ENCODE measurements at regions of chr14 and their contacts with region 1.

Region 1: DNA sequence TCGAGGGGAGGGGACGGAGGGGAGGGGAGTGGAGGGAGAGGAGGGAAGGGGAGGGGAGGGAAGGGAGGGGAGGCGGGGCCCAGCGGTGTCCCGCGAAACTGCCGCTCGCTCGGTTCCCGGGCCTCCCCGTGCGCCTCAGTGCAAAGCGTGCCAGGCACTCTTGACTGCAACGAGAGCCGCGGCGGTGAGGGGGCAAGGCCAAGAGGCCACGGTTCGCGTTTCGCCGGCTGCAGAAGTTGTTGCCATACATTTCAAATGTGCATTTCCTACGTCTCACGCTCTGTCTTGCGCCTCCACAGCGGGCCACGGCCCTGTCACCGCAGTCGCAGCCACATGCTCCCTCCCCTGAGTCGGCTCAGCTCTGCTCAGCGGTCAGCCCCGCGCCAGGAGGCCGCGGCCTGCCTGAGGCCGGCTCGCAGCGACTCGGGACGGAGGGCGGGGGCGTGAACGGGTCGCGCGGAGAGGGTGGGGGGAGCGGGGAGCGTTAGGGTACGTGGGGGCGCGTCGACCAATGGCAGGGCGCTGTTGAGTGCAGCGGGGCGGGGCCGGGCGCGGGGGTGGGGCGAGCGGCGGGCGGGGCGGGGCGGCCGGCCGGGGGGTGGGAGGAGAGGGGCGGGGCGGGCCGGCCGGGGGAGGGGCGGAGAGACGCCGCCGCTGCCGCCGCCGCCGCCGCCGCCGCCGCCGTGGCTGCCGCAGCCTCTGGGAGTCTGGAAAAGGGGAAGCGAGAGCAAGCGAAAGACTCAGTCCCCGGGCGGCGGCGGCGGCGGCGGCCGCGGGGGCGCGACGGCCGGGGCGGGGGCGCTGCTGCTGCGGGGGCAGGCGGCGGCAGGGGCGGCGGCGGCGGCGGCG is at the start of gene PPP2R5C:
- DNase-seq: peak; percentile 96 to 97
- ATAC-seq: peak; percentile 94
- H3K4me3 ChIP-seq: peak within 1 kb of the TSS; percentile 72 to 90
- H3K27ac ChIP-seq: peak within 1 kb of the TSS in 1 of 2 donors; percentile 18
- H3K4me1 ChIP-seq: peaks cover 0 to 1% of the 10 kb centered on the region in 2 donors
- H3K27me3 ChIP-seq: no peaks in the 10 kb centered on the region
- total RNA-seq, gene PPP2R5C: 128 to 155 TPM

Region 2: DNA sequence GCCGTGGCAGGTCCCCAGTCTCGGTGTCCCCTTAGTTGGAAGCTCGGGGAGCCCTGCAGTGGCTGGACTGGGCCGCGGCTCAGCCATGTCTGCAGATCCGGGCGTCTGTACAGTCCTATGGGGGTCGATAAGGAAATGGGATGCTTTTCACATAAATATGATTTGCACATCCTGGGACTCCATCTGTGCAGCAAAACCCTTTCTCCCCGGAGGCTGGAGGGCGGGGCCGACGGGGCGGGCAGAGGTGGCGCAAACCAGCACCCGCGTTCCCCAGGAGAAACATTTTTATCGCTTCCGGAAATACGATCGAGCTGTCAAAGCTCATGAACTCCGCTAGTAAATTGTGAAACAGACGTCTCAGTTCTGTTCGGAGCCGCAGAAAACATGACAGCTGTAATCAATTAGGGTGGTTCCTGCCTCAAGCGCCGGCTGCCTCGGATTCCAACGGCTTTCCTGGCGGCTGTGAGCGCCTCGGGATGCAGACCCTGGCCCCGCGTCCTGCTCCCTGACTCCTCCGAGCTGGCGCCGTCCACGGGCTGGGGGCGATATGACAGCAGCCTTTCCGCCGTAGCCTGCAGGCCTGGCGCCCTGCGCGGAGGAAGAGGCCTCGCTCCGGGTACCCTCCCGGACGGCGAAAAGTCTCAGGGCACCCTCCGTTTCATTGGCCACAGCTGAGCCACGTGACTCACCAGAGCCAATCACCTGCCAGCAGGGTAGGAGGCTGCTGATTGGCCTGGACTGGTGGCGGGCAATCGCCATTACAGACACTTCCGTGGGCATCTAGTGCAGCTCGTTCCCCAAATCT is 177.0 kb before region 1 on chr14:
- intact Hi-C with region 1: no loop called
- DNase-seq: no peak
- ATAC-seq: no peak
- H3K4me3 ChIP-seq: no peak overlapping the region
- H3K27ac ChIP-seq: no peak overlapping the region
- H3K4me1 ChIP-seq: no peaks in the 10 kb centered on the region
- H3K27me3 ChIP-seq: no peaks in the 10 kb centered on the region

Region 3: DNA sequence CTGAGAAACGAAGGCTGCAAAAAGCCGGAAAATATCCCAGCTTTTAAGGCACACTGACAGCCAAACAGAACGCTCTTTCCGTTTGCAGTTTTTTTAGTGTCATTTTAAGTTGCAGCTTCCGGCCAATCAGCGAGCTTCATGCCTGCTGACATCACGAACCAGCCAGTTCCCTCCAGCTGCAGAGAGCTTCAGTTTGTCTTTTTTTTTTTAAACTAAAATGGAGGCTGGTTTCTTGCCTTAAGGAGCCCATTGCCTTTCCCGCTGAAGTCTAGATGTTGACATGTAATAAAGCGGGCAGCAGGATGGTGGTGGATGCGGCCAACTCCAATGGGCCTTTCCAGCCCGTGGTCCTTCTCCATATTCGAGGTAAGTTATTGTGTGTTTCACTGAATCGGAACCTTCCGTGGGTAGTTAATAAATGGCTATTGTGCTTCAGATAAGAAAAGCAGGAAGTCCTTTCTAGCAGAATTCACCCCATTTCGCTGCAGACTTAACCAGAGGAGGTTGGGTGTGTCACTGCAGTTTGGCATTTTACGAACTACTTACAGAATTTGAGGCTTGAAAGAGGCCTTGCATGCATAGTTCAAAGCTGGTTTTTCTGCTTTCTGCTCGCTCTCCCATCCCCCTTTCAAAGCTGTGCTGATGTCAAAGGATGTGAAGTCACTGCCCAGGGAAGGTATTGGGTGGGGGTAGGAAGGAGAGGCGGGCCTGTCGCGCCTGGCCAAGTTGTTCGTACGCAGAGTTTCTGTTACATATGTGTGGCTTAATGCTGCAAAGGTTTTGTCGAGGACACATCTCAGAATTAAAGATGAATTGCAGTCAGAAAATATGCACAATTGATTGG is 48.6 kb after region 1 on chr14:
- intact Hi-C with region 1: loop called (anchors 5 kb)
- DNase-seq: peak; percentile 89 to 93
- ATAC-seq: peak; percentile 96
- H3K4me3 ChIP-seq: peak overlapping the region; percentile 78 to 88
- H3K27ac ChIP-seq: peak overlapping the region; percentile 89 to 96
- H3K4me1 ChIP-seq: no peaks in the 10 kb centered on the region
- H3K27me3 ChIP-seq: no peaks in the 10 kb centered on the region

Region 4: DNA sequence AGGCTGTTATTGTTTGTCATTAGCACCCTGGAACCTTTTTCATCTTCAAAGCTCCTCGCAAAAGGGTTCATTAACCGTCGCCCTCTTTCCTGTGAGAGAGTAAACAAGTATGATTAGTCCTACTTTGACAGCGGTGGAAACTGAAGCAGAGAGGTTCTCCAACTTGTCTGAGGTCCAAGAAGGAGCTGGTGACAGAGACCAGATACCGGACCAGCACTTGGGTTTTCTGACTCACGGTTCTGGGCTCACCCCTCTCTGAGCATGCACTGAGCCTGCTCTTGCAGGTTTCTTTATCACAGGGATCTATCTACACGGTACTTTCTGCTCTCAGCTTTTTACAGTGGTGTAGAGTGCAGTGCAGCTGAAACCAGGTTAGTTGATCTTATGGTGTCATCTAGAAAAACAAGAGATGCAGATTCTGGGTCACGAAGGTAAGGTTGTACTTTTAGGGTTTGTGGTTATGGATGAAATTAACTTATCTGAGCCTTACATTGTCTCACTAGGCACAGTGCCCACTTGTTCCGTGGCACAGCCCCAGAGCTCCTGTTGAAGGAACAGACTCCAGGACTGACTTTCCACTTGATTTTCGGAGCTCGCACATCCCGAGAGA is 62.4 kb after region 1 on chr14:
- intact Hi-C with region 1: no loop called
- DNase-seq: no peak
- ATAC-seq: peak; percentile 71
- H3K4me3 ChIP-seq: peak overlapping the region in 1 of 2 donors; percentile 8
- H3K27ac ChIP-seq: peak overlapping the region in 1 of 2 donors; percentile 30
- H3K4me1 ChIP-seq: no peaks in the 10 kb centered on the region
- H3K27me3 ChIP-seq: no peaks in the 10 kb centered on the region

Region 5: GRCh38 chr14:101947906-101948665 is 186.8 kb after region 1 on chr14:
- intact Hi-C with region 1: loop called in 1 of 2 experiments (anchors 5 kb)
- DNase-seq: peak; percentile 100
- ATAC-seq: peak; percentile 99
- H3K4me3 ChIP-seq: peak overlapping the region; percentile 45 to 49
- H3K27ac ChIP-seq: peak overlapping the region; percentile 53 to 91
- H3K4me1 ChIP-seq: no peaks in the 10 kb centered on the region
- H3K27me3 ChIP-seq: no peaks in the 10 kb centered on the region

Region 6: GRCh38 chr14:101972268-101972774 is 211.1 kb after region 1 on chr14:
- intact Hi-C with region 1: no loop called
- DNase-seq: peak; percentile 89 to 90
- ATAC-seq: peak; percentile 95
- H3K4me3 ChIP-seq: no peak overlapping the region
- H3K27ac ChIP-seq: no peak overlapping the region
- H3K4me1 ChIP-seq: peaks cover 0 to 3% of the 10 kb centered on the region in 2 donors
- H3K27me3 ChIP-seq: no peaks in the 10 kb centered on the region